Gastrocnemius medialis (tissue), 4 donors: ENCODE measurements at regions of chr4 and their contacts with region 1.

Region 1: DNA sequence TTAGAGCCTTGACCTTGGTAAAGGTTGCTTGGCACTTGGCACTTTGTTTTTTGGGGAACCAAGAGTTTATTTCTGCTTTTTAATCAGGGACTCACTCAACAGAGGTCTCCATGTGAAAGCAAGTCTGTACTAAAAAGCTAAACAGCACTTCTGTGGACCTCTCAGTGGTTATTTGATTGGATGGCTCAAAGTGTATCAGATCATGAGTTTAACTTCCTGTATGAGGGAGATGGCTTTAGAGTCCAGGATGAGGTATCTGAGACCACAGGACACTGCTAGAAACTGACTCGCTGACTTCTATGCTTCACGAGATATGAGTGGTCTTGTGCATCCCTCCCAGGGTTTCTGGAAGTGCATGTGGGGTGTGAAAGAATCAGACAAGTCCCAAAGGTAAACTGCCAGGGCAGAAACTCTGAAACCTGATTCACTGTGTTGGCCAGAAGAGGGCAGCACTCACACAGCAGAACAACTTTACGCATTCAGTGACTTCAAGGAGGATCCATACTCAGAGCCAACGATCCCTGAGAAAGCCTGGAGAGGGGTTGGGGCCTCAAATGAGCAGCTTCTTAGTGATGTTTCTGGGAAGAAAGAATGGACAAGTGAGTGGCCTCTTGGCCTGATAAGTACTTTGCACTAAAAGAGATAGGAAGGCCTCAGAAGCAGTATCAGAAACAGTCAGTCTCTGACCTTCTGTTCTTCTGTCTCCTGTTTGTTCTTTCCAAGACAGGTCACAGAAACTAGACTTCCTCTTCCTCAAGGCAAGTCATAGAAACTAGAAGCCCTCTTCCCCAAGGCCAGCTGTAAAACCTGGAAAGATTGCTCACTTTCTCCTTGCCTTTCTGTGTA is 220.3 kb upstream of the CXCL13 start:
- DNase-seq: peak; percentile 6 to 28
- ATAC-seq: peak; percentile 71 to 83
- H3K4me3 ChIP-seq: no peak overlapping the region
- H3K27ac ChIP-seq: no peak overlapping the region
- H3K4me1 ChIP-seq: peaks cover 9 to 15% of the 10 kb centered on the region in 2 donors
- H3K27me3 ChIP-seq: no peaks in the 10 kb centered on the region
- CTCF ChIP-seq: peak; percentile 42 to 81 (median 62)
- POLR2A ChIP-seq: no peak

Region 2: DNA sequence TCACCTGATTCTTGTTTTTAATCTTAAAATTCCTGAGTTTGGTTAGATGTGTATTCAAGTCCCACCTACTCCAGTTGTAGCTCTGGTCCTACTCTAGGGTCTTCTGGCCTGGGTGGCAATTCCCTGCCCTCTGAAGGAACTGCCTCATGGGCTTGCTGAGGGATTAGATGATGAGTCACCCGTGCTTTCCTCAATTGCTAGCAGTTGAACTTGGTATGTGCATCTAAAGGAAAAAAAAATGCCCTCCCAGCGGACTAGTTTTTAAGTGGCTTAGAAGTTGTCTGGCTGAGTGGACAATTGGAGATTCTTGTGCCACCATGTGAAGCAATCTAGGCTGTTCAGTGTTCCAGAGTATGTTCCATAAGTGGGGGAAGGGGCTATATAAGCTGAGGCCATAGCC is 101.3 kb before region 1 on chr4:
- in situ Hi-C with region 1: no loop called
- intact Hi-C with region 1: no loop called
- DNase-seq: no peak
- ATAC-seq: no peak
- H3K4me3 ChIP-seq: no peak overlapping the region
- H3K27ac ChIP-seq: no peak overlapping the region
- H3K4me1 ChIP-seq: no peaks in the 10 kb centered on the region
- H3K27me3 ChIP-seq: no peaks in the 10 kb centered on the region
- CTCF ChIP-seq: no peak
- POLR2A ChIP-seq: no peak

Region 3: GRCh38 chr4:77433418-77433733 is 48.0 kb after region 1 on chr4:
- in situ Hi-C with region 1: loop called in 1 of 4 experiments (anchors 10 kb)
- intact Hi-C with region 1: loop called (anchors 1 kb)
- DNase-seq: no peak
- ATAC-seq: peak; percentile 64 to 75
- H3K4me3 ChIP-seq: no peak overlapping the region
- H3K27ac ChIP-seq: no peak overlapping the region
- H3K4me1 ChIP-seq: peaks cover 6 to 24% of the 10 kb centered on the region in 2 donors
- H3K27me3 ChIP-seq: no peaks in the 10 kb centered on the region
- CTCF ChIP-seq: peak in 3 of 5 experiments; percentile 23 to 51 (median 50)
- POLR2A ChIP-seq: no peak

Region 4: GRCh38 chr4:77600521-77601451 is 215.4 kb after region 1 on chr4:
- in situ Hi-C with region 1: loop called in 3 of 4 experiments (anchors 10 kb)
- intact Hi-C with region 1: loop called (anchors 2 kb)
- DNase-seq: no peak
- ATAC-seq: no peak
- H3K4me3 ChIP-seq: no peak overlapping the region
- H3K27ac ChIP-seq: no peak overlapping the region
- H3K4me1 ChIP-seq: no peaks in the 10 kb centered on the region
- H3K27me3 ChIP-seq: no peaks in the 10 kb centered on the region
- CTCF ChIP-seq: peak in 4 of 5 experiments; percentile 37 to 73 (median 52)
- POLR2A ChIP-seq: no peak

Region 5: DNA sequence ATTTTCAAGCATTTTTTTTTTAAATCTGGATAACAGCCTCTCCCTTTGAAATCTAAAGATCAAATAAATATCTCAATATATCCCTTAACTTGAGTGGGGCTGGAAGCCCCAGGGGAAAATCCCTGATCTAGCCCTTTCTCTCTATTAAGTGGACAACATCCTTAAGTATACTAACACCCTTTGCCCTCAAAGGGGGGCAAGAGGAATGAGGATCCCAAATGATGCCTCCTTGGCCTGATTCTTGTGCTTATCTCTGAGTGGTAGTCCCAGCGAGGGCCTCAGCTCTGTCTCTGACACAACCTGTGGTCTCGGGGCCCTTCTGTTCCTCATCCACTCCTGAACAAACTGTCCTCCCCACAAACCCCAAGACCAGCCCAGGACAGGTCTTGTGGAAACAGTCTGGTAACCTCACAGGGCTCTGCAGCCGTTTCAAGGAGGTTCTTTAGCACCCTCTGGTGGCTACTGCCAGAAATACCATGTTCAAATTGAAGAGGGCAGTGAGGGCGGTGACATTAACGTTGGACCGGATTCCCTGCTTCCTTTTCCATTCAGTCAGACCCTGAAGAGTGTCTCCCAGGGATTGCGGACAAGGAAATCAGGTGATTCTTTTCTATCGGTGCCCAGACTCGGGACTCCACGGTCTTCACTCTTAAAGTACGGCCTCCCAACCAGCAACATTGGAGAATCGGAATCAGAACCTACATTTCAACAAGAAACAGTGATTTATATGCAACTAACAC is 233.2 kb after region 1 on chr4:
- in situ Hi-C with region 1: loop called in 1 of 4 experiments (anchors 10 kb)
- intact Hi-C with region 1: loop called (anchors 5 kb)
- DNase-seq: peak; percentile 32 to 45
- ATAC-seq: peak; percentile 91 to 93
- H3K4me3 ChIP-seq: peak overlapping the region in 1 of 4 donors; percentile 13
- H3K27ac ChIP-seq: no peak overlapping the region
- H3K4me1 ChIP-seq: no peaks in the 10 kb centered on the region
- H3K27me3 ChIP-seq: no peaks in the 10 kb centered on the region
- CTCF ChIP-seq: peak; percentile 40 to 77 (median 64)
- POLR2A ChIP-seq: no peak

Region 6: DNA sequence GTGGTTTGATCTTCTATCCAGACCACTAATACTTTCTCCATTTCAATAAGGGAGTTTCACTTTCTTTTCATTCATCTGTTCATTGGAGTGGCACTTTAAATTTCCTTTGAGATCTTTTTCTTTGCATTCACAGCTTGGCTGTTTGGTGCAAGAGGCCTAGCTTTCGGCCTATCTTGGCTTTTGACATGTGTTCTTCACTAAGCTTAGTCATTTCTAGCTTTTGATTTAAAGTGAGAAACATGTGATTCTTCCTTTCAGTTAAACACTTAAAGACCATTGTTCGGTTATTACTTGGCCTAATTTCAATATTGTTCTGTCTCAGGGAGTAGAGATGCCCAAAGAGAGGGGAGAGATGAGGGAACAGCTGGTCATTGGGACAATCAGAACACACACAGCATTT is 244.5 kb after region 1 on chr4:
- in situ Hi-C with region 1: loop called in 1 of 4 experiments (anchors 10 kb)
- intact Hi-C with region 1: no loop called
- DNase-seq: no peak
- ATAC-seq: no peak
- H3K4me3 ChIP-seq: no peak overlapping the region
- H3K27ac ChIP-seq: no peak overlapping the region
- H3K4me1 ChIP-seq: no peaks in the 10 kb centered on the region
- H3K27me3 ChIP-seq: no peaks in the 10 kb centered on the region
- CTCF ChIP-seq: no peak
- POLR2A ChIP-seq: no peak

Region 7: GRCh38 chr4:77697860-77698590 is 312.7 kb after region 1 on chr4:
- in situ Hi-C with region 1: loop called in 1 of 4 experiments (anchors 10 kb)
- intact Hi-C with region 1: loop called (anchors 5 kb)
- DNase-seq: peak; percentile 14 to 53
- ATAC-seq: peak; percentile 83 to 93
- H3K4me3 ChIP-seq: peak overlapping the region; percentile 20 to 35 (median 24)
- H3K27ac ChIP-seq: peak overlapping the region; percentile 51 to 81 (median 58)
- H3K4me1 ChIP-seq: peaks cover 7 to 34% of the 10 kb centered on the region in 2 donors
- H3K27me3 ChIP-seq: no peaks in the 10 kb centered on the region
- CTCF ChIP-seq: peak in 3 of 5 experiments; percentile 4 to 30 (median 27)
- POLR2A ChIP-seq: no peak

Region 8: GRCh38 chr4:77905644-77906263 is 520.4 kb after region 1 on chr4:
- in situ Hi-C with region 1: no loop called
- intact Hi-C with region 1: no loop called
- DNase-seq: no peak
- ATAC-seq: no peak
- H3K4me3 ChIP-seq: no peak overlapping the region
- H3K27ac ChIP-seq: no peak overlapping the region
- H3K4me1 ChIP-seq: no peaks in the 10 kb centered on the region
- H3K27me3 ChIP-seq: no peaks in the 10 kb centered on the region
- CTCF ChIP-seq: no peak
- POLR2A ChIP-seq: no peak